Esophagus squamous epithelium (tissue), 5 donors: ENCODE measurements at regions of chr2 and their contacts with region 1.

Region 1: DNA sequence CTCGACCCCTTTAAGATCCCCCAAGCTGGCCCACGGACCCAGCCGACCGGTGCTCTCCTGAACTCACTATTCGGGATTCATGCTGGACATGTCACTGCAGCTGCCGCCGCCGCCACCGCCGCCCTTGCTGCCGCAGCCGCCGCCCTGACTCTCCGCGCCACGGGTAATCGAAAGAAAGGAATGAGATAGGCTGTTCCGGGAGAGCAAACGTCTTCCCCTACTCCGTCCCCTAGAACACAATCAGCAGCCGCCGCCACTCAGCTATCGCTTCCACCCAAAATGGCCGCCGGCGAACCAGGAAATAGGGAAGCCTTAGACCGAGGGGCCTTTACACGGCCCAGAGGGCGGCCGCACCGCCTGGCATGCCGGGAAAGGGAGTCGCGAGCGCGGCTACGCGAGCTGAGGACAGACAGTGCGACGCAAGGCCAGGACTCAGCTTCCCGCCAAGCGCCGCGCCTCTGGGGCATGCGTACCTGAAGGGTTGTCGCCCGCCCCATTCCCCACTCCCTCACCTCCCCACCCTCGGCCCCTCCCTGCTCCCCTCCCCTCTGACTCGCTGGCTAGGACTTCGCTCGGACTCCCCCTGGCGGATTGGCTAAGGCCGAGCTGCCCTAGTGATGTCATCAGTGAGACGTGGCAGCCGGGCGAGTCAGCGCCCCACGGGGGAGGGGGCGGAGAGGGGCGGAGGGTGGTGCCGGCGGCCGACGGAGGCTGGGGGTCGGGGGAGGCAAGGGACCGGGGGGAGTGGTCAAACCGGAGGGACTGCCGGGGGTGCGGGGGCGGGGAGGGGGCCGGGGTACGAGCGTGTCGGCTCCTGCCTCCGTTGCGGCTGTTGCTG is at the start of gene RAB1A:
- DNase-seq: peak; percentile 99
- H3K4me3 ChIP-seq: peak within 1 kb of the TSS; percentile 86 to 97 (median 92)
- H3K27ac ChIP-seq: peak within 1 kb of the TSS; percentile 96 to 100 (median 100)
- H3K4me1 ChIP-seq: peaks cover 16 to 44% (median 34%) of the 10 kb centered on the region in 3 donors
- H3K27me3 ChIP-seq: no peaks in the 10 kb centered on the region
- CTCF ChIP-seq: peak; percentile 23 to 45 (median 30)
- POLR2A ChIP-seq: peak in 3 of 4 donors; percentile 80 to 93 (median 86)
- total RNA-seq, gene RAB1A: 72.6 to 101 (median 78.3) TPM

Region 2: GRCh38 chr2:65070172-65070830 is 59.7 kb before region 1 on chr2:
- intact Hi-C with region 1: loop called (anchors 10 kb)
- DNase-seq: no peak
- H3K4me3 ChIP-seq: no peak overlapping the region
- H3K27ac ChIP-seq: peak overlapping the region; percentile 2 to 68 (median 58)
- H3K4me1 ChIP-seq: peaks cover 22 to 72% (median 53%) of the 10 kb centered on the region in 3 donors
- H3K27me3 ChIP-seq: no peaks in the 10 kb centered on the region
- CTCF ChIP-seq: peak in 2 of 6 experiments; percentile 8 to 22
- POLR2A ChIP-seq: no peak